MCF 10A (cell line): ENCODE measurements at regions of chr9 and their contacts with region 1.

Region 1: GRCh38 chr9:120714088-120714845 is at the start of gene MEGF9:
- DNase-seq: peak; percentile 98
- H3K4me3 Mint-ChIP-seq: peak within 1 kb of the TSS; percentile 91
- H3K27ac Mint-ChIP-seq: peak within 1 kb of the TSS; percentile 95
- H3K4me1 Mint-ChIP-seq: peaks cover 20% of the 10 kb centered on the region
- H3K27me3 Mint-ChIP-seq: no peaks in the 10 kb centered on the region
- CTCF ChIP-seq: no peak
- total RNA-seq, gene MEGF9: 5.7 and 6.9 TPM in 2 replicates

Region 2: GRCh38 chr9:120625222-120625621 is 89.0 kb before region 1 on chr9:
- CTCF ChIA-PET with region 1: interaction called, 5 read pairs
- POLR2A ChIA-PET with region 1: interaction called, 22 read pairs
- intact Hi-C with region 1: no loop called
- DNase-seq: no peak
- H3K4me3 Mint-ChIP-seq: no peak overlapping the region
- H3K27ac Mint-ChIP-seq: peak overlapping the region; percentile 72
- H3K4me1 Mint-ChIP-seq: peaks cover 18% of the 10 kb centered on the region
- H3K27me3 Mint-ChIP-seq: no peaks in the 10 kb centered on the region
- CTCF ChIP-seq: no peak

Region 3: GRCh38 chr9:120655005-120655622 is 59.2 kb before region 1 on chr9:
- CTCF ChIA-PET with region 1: interaction called, 3 read pairs
- POLR2A ChIA-PET with region 1: interaction called, 26 read pairs
- intact Hi-C with region 1: no loop called
- DNase-seq: peak; percentile 66
- H3K4me3 Mint-ChIP-seq: no peak overlapping the region
- H3K27ac Mint-ChIP-seq: no peak overlapping the region
- H3K4me1 Mint-ChIP-seq: peaks cover 21% of the 10 kb centered on the region
- H3K27me3 Mint-ChIP-seq: no peaks in the 10 kb centered on the region
- CTCF ChIP-seq: no peak

Region 4: GRCh38 chr9:120730661-120731514 is 16.6 kb after region 1 on chr9:
- CTCF ChIA-PET with region 1: interaction called, 9 read pairs
- POLR2A ChIA-PET with region 1: interaction called, 10 read pairs
- intact Hi-C with region 1: no loop called
- DNase-seq: peak; percentile 84
- H3K4me3 Mint-ChIP-seq: no peak overlapping the region
- H3K27ac Mint-ChIP-seq: peak overlapping the region; percentile 27
- H3K4me1 Mint-ChIP-seq: peaks cover 22% of the 10 kb centered on the region
- H3K27me3 Mint-ChIP-seq: no peaks in the 10 kb centered on the region
- CTCF ChIP-seq: no peak